CD8-positive, alpha-beta T cell (primary cell): ENCODE measurements at regions of chr1 and their contacts with region 1.

Region 1: DNA sequence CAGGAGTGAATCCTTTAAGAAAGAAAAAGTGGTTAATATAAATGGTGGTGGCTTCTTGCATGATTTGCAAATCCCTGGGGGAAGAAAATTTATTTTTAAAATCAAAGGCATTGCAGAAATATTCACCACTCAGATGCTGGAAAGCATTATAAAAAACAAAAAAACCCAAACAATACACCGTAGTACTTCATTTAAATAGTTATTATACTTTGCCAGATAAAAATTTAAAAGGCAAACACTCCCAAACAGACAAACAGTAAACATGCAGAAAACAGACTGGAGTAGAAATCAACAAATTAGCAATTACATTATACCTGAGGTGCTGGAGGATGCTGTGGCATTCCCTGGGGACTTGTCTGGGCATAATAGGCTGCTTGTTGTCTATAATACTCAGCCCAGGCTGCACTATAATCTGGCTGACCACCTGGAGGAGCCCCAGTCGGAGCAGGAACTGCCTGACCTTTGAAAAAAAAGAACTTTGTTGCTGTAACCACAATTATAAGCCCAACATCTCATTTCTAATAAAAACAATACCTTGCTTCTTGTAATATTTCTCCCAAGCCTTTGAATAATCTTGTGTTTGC is 29.9 kb downstream of the FUBP1 start:
- DNase-seq: no peak
- ATAC-seq: no peak
- H3K4me3 ChIP-seq: no peak overlapping the region
- H3K4me3 Mint-ChIP-seq: no peak overlapping the region
- H3K27ac ChIP-seq: no peak overlapping the region
- H3K27ac Mint-ChIP-seq: no peak overlapping the region
- H3K4me1 ChIP-seq: no peaks in the 10 kb centered on the region
- H3K4me1 Mint-ChIP-seq: peaks cover 34% of the 10 kb centered on the region
- H3K27me3 ChIP-seq: no peaks in the 10 kb centered on the region
- H3K27me3 Mint-ChIP-seq: no peaks in the 10 kb centered on the region
- CTCF ChIP-seq: no peak

Region 2: DNA sequence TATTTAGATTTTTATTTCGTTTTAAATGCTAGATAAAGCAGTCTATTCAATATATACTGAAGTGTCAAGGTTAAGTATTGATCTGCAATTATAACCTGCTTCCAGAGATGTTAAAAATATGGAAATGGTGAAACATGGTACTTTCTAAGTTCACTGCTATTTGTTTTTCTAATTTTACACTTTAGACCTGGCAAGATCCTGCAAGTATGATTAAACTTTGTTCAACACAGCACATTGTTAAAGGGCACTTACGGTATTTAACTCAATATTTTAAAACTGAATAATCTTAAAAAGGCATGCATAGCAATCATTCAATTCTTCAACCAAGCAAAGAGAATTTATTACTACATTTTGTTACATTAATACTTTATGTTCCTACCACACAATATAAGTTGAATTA is 230.8 kb before region 1 on chr1:
- CTCF ChIA-PET with region 1: no interaction called
- POLR2A ChIA-PET with region 1: no interaction called
- intact Hi-C with region 1: loop called (anchors 10 kb)
- DNase-seq: no peak
- ATAC-seq: no peak
- H3K4me3 ChIP-seq: no peak overlapping the region
- H3K4me3 Mint-ChIP-seq: no peak overlapping the region
- H3K27ac ChIP-seq: no peak overlapping the region
- H3K27ac Mint-ChIP-seq: no peak overlapping the region
- H3K4me1 ChIP-seq: no peaks in the 10 kb centered on the region
- H3K4me1 Mint-ChIP-seq: no peaks in the 10 kb centered on the region
- H3K27me3 ChIP-seq: no peaks in the 10 kb centered on the region
- H3K27me3 Mint-ChIP-seq: no peaks in the 10 kb centered on the region
- CTCF ChIP-seq: no peak

Region 3: DNA sequence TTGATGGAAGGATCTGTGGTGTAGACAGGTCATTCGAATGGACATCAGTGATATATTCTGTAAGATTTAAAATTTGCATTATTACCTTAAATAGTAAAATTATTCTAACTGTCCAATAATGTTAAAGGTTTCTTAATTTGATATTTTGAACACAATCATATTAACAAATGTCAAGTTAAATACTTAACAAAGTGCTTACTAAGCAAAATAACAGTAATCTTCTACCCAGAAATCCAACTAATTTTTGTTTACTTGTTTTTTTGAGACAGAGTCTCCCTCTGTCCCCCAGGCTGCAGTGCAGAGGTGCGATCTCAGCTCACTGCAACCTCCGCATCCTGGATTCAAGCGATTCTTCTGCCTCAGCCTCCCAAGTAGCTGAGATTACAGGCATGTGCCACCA is 223.2 kb before region 1 on chr1:
- CTCF ChIA-PET with region 1: no interaction called
- POLR2A ChIA-PET with region 1: no interaction called
- intact Hi-C with region 1: loop called in 1 of 2 experiments (anchors 10 kb)
- DNase-seq: no peak
- ATAC-seq: no peak
- H3K4me3 ChIP-seq: no peak overlapping the region
- H3K4me3 Mint-ChIP-seq: no peak overlapping the region
- H3K27ac ChIP-seq: no peak overlapping the region
- H3K27ac Mint-ChIP-seq: no peak overlapping the region
- H3K4me1 ChIP-seq: no peaks in the 10 kb centered on the region
- H3K4me1 Mint-ChIP-seq: no peaks in the 10 kb centered on the region
- H3K27me3 ChIP-seq: no peaks in the 10 kb centered on the region
- H3K27me3 Mint-ChIP-seq: no peaks in the 10 kb centered on the region
- CTCF ChIP-seq: no peak

Region 4: GRCh38 chr1:77882411-77882810 is 66.5 kb before region 1 on chr1:
- CTCF ChIA-PET with region 1: no interaction called
- POLR2A ChIA-PET with region 1: no interaction called
- intact Hi-C with region 1: loop called in 1 of 2 experiments (anchors 5 kb)
- DNase-seq: peak in 2 of 9 experiments; percentile 6 to 19
- ATAC-seq: no peak
- H3K4me3 ChIP-seq: no peak overlapping the region
- H3K4me3 Mint-ChIP-seq: no peak overlapping the region
- H3K27ac ChIP-seq: no peak overlapping the region
- H3K27ac Mint-ChIP-seq: no peak overlapping the region
- H3K4me1 ChIP-seq: no peaks in the 10 kb centered on the region
- H3K4me1 Mint-ChIP-seq: peaks cover 16% of the 10 kb centered on the region
- H3K27me3 ChIP-seq: no peaks in the 10 kb centered on the region
- H3K27me3 Mint-ChIP-seq: peaks cover 9% of the 10 kb centered on the region
- CTCF ChIP-seq: no peak

Region 5: GRCh38 chr1:77986810-77987209 is 37.9 kb after region 1 on chr1:
- CTCF ChIA-PET with region 1: no interaction called
- POLR2A ChIA-PET with region 1: no interaction called
- intact Hi-C with region 1: loop called in 1 of 2 experiments (anchors 5 kb)
- DNase-seq: no peak
- ATAC-seq: no peak
- H3K4me3 ChIP-seq: no peak overlapping the region
- H3K4me3 Mint-ChIP-seq: no peak overlapping the region
- H3K27ac ChIP-seq: no peak overlapping the region
- H3K27ac Mint-ChIP-seq: no peak overlapping the region
- H3K4me1 ChIP-seq: peaks cover 3% of the 10 kb centered on the region
- H3K4me1 Mint-ChIP-seq: peaks cover 32% of the 10 kb centered on the region
- H3K27me3 ChIP-seq: no peaks in the 10 kb centered on the region
- H3K27me3 Mint-ChIP-seq: no peaks in the 10 kb centered on the region
- CTCF ChIP-seq: no peak

Region 6: DNA sequence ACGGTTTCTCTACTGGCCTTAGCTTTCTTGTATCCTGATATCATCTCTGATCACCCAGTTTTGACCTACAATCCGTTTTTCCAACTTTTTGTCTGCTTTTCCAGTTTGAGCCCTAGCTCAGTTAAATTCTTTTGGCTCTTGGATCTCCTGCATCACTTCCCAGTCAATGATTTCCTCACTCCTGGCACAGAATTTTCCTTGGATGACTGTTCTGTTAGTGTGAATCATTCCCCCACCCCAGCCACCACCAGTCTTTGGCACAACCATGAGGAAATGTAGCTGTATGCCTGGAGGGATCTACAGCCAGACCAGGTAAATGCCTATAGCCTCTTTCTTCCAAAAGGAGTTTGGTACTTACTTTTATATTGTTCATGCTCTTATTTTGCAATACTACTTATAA is 354.7 kb after region 1 on chr1:
- CTCF ChIA-PET with region 1: no interaction called
- POLR2A ChIA-PET with region 1: no interaction called
- intact Hi-C with region 1: no loop called
- DNase-seq: no peak
- ATAC-seq: no peak
- H3K4me3 ChIP-seq: no peak overlapping the region
- H3K4me3 Mint-ChIP-seq: no peak overlapping the region
- H3K27ac ChIP-seq: no peak overlapping the region
- H3K27ac Mint-ChIP-seq: no peak overlapping the region
- H3K4me1 ChIP-seq: no peaks in the 10 kb centered on the region
- H3K4me1 Mint-ChIP-seq: no peaks in the 10 kb centered on the region
- H3K27me3 ChIP-seq: no peaks in the 10 kb centered on the region
- H3K27me3 Mint-ChIP-seq: peaks cover 2% of the 10 kb centered on the region
- CTCF ChIP-seq: no peak